Activated CD4-positive, alpha-beta T cell treated with anti-CD3 and anti-CD28 coated beads, Interleukin-2, amount 10 ng/mL, durations not matched to agents 7 days and 5 days (primary cell): ENCODE measurements at regions of chr12 and their contacts with region 1.

Region 1: DNA sequence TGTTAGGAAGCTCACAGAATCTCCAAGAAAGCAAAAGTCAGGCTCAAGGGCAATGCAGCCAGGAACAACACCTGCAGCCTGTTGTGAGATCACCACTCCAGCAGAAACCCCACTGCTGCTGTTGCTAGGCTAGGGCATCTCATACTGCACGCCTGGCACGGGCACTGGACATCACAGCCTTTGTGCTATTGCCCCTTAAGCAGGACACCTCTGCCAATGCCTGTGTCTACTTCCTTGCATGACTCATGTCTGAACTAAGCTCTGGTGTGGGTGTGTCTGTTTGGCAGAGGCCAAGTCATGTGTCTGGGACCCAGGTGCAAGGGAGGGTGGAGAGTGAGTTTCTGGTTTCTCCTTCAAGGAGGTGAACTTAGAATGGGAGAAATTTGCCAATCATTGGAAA is 10.0 kb upstream of the DDX47 start:
- DNase-seq: peak; percentile 64
- H3K4me3 Mint-ChIP-seq: peak overlapping the region; percentile 35
- H3K27ac Mint-ChIP-seq: peak overlapping the region; percentile 61
- H3K4me1 Mint-ChIP-seq: peaks cover 58% of the 10 kb centered on the region
- H3K27me3 Mint-ChIP-seq: no peaks in the 10 kb centered on the region

Region 2: DNA sequence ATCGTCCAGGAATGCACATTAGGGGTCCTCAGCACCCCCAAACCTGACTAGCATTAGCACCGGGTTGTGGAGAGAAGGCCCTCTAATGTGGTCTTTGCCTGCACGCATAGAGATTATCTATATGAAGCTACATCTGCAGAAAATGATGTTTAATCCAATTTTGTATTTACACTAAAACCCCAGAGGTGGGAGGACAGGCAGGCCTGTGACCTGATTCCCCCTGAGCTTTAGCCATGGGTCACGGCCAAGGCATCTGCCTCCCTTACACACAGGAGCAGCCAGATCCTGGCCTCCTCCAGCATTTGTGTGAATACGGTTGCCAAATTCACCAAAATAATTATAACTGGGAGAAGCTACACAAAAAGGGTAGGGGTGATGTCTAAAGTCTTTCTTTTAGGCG is 10.8 kb before region 1 on chr12:
- CTCF ChIA-PET with region 1: interaction called, 21 read pairs
- POLR2A ChIA-PET with region 1: no interaction called
- DNase-seq: no peak
- H3K4me3 Mint-ChIP-seq: no peak overlapping the region
- H3K27ac Mint-ChIP-seq: no peak overlapping the region
- H3K4me1 Mint-ChIP-seq: peaks cover 18% of the 10 kb centered on the region
- H3K27me3 Mint-ChIP-seq: no peaks in the 10 kb centered on the region

Region 3: GRCh38 chr12:12813120-12814101 is 10.2 kb after region 1 on chr12 and contains the start of gene DDX47:
- CTCF ChIA-PET with region 1: interaction called, 11 read pairs
- POLR2A ChIA-PET with region 1: no interaction called
- DNase-seq: peak; percentile 97
- H3K4me3 Mint-ChIP-seq: peak within 1 kb of the TSS; percentile 86
- H3K27ac Mint-ChIP-seq: peak within 1 kb of the TSS; percentile 89
- H3K4me1 Mint-ChIP-seq: peaks cover 81% of the 10 kb centered on the region
- H3K27me3 Mint-ChIP-seq: no peaks in the 10 kb centered on the region
- total RNA-seq, gene DDX47: 54.5 to 59.0 TPM